KBM-7 (cell line): ENCODE measurements at regions of chr2 and their contacts with region 1.

Region 1: DNA sequence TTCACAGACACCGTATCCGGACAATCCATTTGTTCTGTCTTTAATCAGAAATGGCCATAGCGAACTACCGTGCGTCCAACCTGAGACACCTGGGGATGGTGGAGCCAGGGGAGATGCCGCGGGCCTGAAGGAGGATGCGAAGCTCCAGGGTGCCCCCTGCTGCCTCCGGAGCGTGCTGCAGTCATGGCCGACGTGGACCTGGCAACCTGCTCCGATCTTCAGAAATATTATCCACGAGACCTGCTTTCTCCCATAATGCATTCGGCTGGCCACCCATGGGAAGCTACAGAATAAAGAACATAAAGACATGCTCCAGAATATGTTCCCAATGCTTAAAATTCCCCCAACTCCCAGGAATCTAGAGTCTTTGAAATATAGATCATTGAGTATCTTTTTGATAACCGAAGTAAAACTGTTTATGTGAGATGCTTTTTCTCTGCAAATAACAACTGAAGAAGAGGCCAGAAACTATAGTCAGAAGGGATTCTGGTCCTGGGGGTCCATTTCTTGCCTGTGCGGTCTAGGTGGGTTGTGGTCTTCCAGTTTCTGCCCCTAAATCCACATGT is 30.7 kb upstream of the SLC66A3 start:
- DNase-seq: peak; percentile 74

Region 2: DNA sequence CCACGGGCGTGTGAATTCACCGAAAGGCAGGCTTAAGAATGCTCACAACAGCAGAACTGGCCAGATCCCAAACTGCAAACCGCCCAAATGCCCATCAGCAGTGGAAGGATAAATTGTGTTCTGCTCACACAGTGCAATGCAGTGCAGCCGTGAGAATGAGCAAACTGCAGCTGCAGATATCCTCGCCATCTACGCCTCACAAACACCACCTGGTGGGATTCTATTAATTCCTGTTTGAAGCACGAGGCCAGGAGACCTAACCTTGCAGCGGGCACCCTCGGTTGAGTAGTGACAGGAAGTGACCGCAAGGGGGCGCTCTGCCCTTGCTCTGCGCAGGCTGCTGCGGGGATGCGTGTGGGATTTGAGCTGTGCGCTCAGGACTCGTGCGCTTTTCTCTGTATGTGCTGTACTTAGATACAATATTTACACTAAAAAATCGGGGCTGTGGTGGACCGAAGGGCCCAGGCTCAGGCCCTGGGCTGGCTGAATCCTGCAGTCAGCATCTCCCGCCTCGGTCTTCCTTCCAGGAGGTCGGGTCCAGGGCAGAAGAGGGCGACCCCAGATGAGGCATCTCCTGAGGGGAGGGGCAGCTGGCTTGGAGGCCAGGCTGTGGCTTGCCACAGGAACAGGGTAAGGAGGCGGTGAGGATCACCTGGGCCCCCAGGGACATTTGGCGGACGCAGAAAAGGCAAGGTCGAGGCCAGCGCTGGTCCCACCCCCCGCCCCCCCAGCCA is 292.2 kb before region 1 on chr2:
- in situ Hi-C with region 1: loop called (anchors 10 kb)
- DNase-seq: peak; percentile 85

Region 3: GRCh38 chr2:11411768-11412448 is 287.3 kb after region 1 on chr2:
- in situ Hi-C with region 1: loop called (anchors 25 kb)
- DNase-seq: peak; percentile 64

Region 4: DNA sequence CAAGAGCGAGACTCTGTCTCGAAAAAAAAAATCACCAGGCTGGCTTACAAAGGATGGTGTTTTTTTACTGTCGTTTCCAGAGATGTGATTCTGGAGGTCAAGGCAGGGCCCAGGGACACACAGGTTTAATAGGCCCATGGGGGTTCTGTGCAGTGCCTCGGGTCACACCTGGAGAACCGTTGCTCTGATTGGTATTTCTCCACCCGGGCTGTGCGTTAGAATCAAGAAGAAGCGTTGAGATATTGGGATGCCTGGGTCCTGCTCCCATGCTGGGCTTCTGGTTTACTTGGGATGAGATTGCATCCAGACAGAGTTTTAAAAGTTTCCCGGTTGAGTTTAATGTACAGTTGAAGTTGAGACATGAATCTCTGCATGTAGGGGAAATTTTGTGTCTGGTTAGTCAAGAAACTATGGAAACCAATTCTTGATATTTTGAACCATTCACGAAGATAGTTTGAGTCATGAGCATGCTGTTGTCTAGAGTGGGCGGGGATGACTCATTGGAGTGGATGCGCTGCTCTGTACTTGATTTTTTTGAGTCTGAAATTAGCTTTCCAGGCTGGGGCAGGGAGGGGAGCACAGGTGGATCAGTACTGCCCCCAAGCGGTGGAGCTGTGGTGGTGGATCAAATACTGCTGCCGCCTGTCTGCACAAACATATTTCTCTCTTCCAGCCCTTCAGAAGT is 459.4 kb after region 1 on chr2:
- in situ Hi-C with region 1: loop called (anchors 25 kb)
- DNase-seq: peak; percentile 90